ENCODE measurements at regions of chr5 and their contacts with region 1.

Region 1: GRCh38 chr5:133968049-133968980 is at the start of gene C5orf15:
- DNase-seq: peak; percentile 92
- H3K4me3 Mint-ChIP-seq: peak within 1 kb of the TSS; percentile 98
- H3K27ac Mint-ChIP-seq: peak within 1 kb of the TSS; percentile 96
- H3K4me1 Mint-ChIP-seq: peaks cover 55% of the 10 kb centered on the region
- H3K27me3 Mint-ChIP-seq: no peaks in the 10 kb centered on the region
- total RNA-seq, gene C5orf15: 50.0 and 50.8 TPM in 2 replicates

Region 2: GRCh38 chr5:132963175-132964104 is 1004.9 kb before region 1 on chr5 and contains the start of gene AFF4:
- intact Hi-C with region 1: loop called (anchors 1 kb)
- DNase-seq: peak; percentile 85
- H3K4me3 Mint-ChIP-seq: peak within 1 kb of the TSS; percentile 93
- H3K27ac Mint-ChIP-seq: peak within 1 kb of the TSS; percentile 96
- H3K4me1 Mint-ChIP-seq: peaks cover 17% of the 10 kb centered on the region
- H3K27me3 Mint-ChIP-seq: peaks cover 3% of the 10 kb centered on the region
- total RNA-seq, gene AFF4: 38.3 and 40.9 TPM in 2 replicates

Region 3: DNA sequence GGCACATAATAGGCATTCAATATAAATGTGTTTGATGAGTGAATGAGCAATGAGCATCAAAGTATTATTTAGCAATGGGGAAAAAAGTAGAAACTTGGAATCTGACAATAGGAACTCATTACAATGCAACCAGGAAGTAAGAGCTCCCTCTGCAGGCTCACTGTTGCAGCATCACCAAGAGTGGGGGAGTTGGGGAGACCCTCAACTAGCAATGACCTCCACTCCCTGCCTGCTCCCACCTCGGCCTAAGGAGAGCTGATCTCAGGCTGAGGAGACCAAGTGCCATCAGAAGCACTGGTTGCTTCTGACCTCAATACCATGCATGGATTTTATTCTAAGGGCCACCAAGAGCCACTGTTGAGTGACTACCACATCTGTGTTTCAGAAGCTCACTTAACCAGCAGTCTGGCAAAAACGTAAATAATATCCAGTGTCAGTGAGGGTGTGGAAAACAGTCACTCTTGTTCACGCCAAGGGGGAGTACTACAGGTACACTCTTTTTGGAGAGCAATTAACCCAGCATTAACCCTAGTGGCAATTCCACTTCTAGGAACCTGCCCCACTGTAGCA is 28.5 kb after region 1 on chr5:
- intact Hi-C with region 1: no loop called
- DNase-seq: no peak
- H3K4me3 Mint-ChIP-seq: no peak overlapping the region
- H3K27ac Mint-ChIP-seq: no peak overlapping the region
- H3K4me1 Mint-ChIP-seq: peaks cover 55% of the 10 kb centered on the region
- H3K27me3 Mint-ChIP-seq: no peaks in the 10 kb centered on the region

Region 4: GRCh38 chr5:134215757-134216156 is 247.4 kb after region 1 on chr5:
- intact Hi-C with region 1: no loop called
- DNase-seq: no peak
- H3K4me3 Mint-ChIP-seq: no peak overlapping the region
- H3K27ac Mint-ChIP-seq: no peak overlapping the region
- H3K4me1 Mint-ChIP-seq: peaks cover 52% of the 10 kb centered on the region
- H3K27me3 Mint-ChIP-seq: no peaks in the 10 kb centered on the region

Region 5: DNA sequence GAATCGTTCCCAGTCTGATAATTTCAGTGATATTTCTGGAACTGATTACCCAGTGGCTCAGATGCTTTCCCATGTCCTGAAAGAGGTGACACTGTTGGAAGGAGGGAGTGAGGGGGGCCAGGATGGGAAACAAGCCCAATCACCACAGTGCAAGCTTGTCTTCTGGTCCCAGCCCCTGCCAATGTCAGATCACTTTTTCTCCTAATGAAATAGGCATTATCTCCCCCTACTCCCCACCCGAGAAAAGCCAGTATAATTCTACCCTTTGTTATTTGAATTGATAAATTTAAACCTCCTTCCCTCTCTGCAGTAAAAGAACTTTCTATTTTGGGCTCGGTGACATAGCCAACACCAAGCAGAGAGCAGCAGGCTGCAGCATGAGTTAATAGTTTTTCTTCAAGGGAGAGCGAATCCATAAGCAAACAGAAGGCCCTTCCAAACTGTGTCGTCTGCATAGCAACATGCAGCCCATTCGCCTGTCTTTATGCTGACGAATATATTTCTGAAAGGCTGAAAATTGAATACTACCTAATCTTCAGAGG is 272.2 kb after region 1 on chr5:
- intact Hi-C with region 1: no loop called
- DNase-seq: no peak
- H3K4me3 Mint-ChIP-seq: no peak overlapping the region
- H3K27ac Mint-ChIP-seq: no peak overlapping the region
- H3K4me1 Mint-ChIP-seq: no peaks in the 10 kb centered on the region
- H3K27me3 Mint-ChIP-seq: peaks cover 33% of the 10 kb centered on the region

Region 6: GRCh38 chr5:135364421-135365262 is 1396.3 kb after region 1 on chr5:
- intact Hi-C with region 1: loop called (anchors 5 kb)
- DNase-seq: no peak
- H3K4me3 Mint-ChIP-seq: no peak overlapping the region
- H3K27ac Mint-ChIP-seq: no peak overlapping the region
- H3K4me1 Mint-ChIP-seq: peaks cover 47% of the 10 kb centered on the region
- H3K27me3 Mint-ChIP-seq: no peaks in the 10 kb centered on the region